Activated CD4-positive, alpha-beta T cell treated with anti-CD3 and anti-CD28 coated beads for 36 hours (primary cell): ENCODE measurements at regions of chr3 and their contacts with region 1.

Region 1: GRCh38 chr3:193572426-193572908 is 17.8 kb upstream of the ATP13A4 start:
- DNase-seq: peak; percentile 68
- ATAC-seq: peak; percentile 84
- H3K4me3 Mint-ChIP-seq: no peak overlapping the region
- H3K27ac Mint-ChIP-seq: no peak overlapping the region
- H3K4me1 Mint-ChIP-seq: no peaks in the 10 kb centered on the region
- H3K27me3 Mint-ChIP-seq: no peaks in the 10 kb centered on the region

Region 2: DNA sequence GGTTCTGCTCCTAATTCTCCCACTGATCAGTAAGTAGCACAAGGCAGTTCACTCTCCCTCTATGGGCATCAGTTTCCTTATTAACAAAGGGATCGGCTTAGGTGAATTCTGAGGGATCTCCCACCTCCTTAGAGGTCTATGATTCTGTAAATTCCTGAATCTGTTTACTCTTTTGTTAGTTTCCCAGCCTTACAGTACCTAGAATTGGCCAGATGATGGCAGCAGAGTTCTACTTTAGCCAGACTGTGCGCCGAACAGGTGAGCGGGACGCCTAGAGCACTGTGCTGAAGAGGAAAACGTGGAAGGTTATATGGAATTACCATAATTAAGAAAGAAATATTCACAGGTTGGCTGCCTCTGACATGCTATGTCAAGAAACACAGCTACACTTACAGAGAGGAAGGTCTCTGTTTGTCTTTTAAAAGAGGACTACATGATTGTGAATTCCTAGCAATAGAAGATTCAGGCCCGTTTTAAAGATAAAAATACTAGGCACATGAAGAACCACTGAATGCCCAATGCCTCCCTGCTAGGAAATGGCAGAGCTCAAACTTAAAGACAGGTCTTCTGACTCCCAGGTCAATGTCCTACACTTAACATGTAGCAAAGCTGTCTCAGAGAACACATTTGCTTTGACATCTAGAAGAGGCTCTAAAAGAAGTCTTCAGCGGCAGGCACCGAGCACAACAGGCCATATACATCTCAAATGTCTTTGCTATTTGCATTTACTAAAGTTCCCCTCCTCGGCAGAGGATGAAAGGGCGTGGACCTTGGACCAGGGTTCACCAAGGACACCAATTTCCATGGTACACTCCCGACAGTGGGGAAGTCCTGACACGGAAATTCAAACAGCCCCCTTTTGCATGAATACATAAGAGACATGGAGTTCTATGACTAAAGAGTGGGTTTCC is 1105.0 kb before region 1 on chr3:
- CTCF ChIA-PET with region 1: interaction called, 3 read pairs
- POLR2A ChIA-PET with region 1: no interaction called
- intact Hi-C with region 1: loop called (anchors 2 to 5 kb)
- DNase-seq: peak; percentile 66
- ATAC-seq: peak; percentile 79
- H3K4me3 Mint-ChIP-seq: no peak overlapping the region
- H3K27ac Mint-ChIP-seq: no peak overlapping the region
- H3K4me1 Mint-ChIP-seq: no peaks in the 10 kb centered on the region
- H3K27me3 Mint-ChIP-seq: peaks cover 27% of the 10 kb centered on the region

Region 3: DNA sequence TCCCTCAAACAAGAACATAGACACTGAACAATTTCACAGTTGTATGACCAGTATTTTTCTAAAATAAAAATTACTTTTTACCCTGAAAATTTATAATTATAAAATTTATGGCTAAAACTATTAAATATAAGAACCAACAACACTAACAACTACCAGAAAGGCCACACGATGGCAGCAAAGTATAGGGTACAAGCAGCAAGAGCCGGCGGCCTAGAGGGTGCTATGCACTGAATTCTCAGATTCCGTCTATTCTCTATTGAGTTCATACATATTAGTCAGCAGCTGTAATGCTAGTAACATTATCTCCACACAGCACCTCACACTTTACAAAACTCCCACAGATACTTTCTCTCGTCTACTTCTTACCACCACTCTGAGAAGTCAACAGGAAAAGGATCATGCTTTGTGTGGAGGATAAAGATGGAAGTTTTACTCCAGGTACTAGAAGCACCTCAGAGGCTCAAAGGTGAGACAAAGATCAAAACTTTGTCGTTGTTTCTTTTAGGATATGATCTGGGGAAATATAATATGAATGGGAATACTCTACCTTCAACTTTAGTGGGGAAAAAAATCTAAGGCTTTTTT is 1005.7 kb before region 1 on chr3:
- CTCF ChIA-PET with region 1: interaction called, 4 read pairs
- POLR2A ChIA-PET with region 1: no interaction called
- intact Hi-C with region 1: loop called (anchors 1 to 2 kb)
- DNase-seq: peak; percentile 83
- ATAC-seq: peak; percentile 83
- H3K4me3 Mint-ChIP-seq: no peak overlapping the region
- H3K27ac Mint-ChIP-seq: no peak overlapping the region
- H3K4me1 Mint-ChIP-seq: peaks cover 7% of the 10 kb centered on the region
- H3K27me3 Mint-ChIP-seq: peaks cover 16% of the 10 kb centered on the region

Region 4: DNA sequence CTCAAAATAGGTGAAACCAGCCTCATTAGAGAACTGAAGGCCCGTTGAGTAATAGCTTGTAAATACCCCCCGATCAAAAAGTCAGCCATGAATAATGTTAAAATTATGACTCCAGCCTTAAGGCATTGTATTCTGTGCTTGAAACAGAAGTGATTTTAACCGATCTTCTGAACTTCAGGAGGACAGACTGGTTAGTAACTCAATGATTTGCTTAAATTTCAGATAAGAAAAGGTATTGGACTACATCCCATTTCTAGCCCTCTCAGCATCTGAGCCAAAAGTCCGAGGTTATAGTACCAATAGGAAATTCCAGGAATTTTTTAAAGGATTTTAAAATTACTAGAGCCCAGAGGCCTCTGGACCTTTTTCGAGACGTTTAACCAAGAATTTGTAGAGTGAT is 777.4 kb before region 1 on chr3:
- CTCF ChIA-PET with region 1: no interaction called
- POLR2A ChIA-PET with region 1: no interaction called
- intact Hi-C with region 1: no loop called
- DNase-seq: no peak
- ATAC-seq: no peak
- H3K4me3 Mint-ChIP-seq: no peak overlapping the region
- H3K27ac Mint-ChIP-seq: no peak overlapping the region
- H3K4me1 Mint-ChIP-seq: no peaks in the 10 kb centered on the region
- H3K27me3 Mint-ChIP-seq: no peaks in the 10 kb centered on the region

Region 5: DNA sequence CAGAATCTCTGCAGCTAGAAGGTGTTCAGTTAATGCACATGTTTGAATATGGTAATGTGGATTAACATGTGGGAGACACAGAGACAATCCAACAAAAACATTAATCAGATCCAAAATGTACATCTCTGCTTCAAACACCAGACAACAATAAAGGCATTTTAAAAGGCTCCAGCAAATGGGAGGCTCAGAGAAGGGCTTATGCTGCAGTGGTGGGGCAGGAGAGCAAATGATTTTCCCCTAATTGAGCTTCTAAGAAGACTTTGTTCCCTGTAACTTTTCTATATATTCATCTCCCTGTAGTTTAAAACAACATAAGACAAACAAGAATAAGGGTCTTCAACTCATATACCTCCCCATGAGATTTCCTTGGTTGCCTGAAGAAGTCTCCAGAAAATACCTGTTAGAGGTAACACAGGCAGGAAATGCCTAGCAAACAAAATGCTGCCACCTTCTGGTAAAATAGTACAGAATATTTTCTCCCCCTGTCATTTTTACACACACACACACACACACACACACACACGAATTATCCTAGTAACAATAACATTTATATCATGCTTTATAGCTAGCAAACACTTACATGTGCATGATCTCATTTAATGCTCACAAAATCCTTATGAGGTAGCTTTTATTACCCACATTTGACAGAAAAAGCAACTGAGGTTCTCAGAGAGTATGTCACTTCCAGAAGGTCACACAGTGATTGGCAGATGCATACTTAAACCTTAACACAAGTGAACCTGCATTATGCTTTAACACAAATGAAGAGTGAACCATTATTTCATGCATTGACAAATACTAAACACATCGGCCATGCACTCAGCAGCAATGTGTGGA is 531.4 kb before region 1 on chr3:
- CTCF ChIA-PET with region 1: no interaction called
- POLR2A ChIA-PET with region 1: no interaction called
- intact Hi-C with region 1: loop called in 1 of 2 experiments (anchors 5 kb)
- DNase-seq: no peak
- ATAC-seq: no peak
- H3K4me3 Mint-ChIP-seq: no peak overlapping the region
- H3K27ac Mint-ChIP-seq: no peak overlapping the region
- H3K4me1 Mint-ChIP-seq: no peaks in the 10 kb centered on the region
- H3K27me3 Mint-ChIP-seq: no peaks in the 10 kb centered on the region

Region 6: GRCh38 chr3:193190146-193190786 is 382.2 kb before region 1 on chr3:
- CTCF ChIA-PET with region 1: no interaction called
- POLR2A ChIA-PET with region 1: no interaction called
- intact Hi-C with region 1: loop called in 1 of 2 experiments (anchors 1 kb)
- DNase-seq: peak; percentile 19
- ATAC-seq: peak; percentile 30
- H3K4me3 Mint-ChIP-seq: no peak overlapping the region
- H3K27ac Mint-ChIP-seq: no peak overlapping the region
- H3K4me1 Mint-ChIP-seq: no peaks in the 10 kb centered on the region
- H3K27me3 Mint-ChIP-seq: peaks cover 10% of the 10 kb centered on the region

Region 7: DNA sequence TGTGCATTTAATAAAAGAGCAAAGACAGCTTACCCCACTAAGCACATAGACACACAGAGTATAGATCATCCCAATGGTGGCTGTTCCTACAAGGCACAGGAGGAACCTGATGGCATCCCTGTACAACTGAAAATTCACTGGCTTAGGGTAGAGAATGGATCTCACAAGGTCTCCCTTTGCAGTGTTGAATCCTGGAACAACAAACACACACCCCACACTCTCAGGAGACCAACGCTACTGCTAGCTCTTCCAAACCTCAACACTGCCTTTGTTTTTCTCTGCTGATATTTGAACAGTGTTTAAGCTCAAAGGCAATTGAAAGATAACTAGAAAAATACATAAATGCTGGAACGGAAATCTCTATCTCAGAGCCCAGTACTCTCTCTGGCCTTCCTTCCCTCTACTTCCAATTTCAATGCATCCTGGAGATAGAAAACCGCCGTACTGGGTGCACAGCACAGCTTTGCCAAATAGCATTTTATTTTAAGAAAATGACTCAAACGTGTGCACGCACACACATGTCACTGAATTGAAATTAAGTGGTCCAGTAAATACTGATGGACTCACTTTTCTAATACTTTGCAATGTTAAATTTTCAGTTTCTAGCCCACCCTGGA is 106.4 kb before region 1 on chr3:
- CTCF ChIA-PET with region 1: interaction called, 4 read pairs
- POLR2A ChIA-PET with region 1: no interaction called
- intact Hi-C with region 1: loop called (anchors 1 kb)
- DNase-seq: no peak
- ATAC-seq: no peak
- H3K4me3 Mint-ChIP-seq: no peak overlapping the region
- H3K27ac Mint-ChIP-seq: no peak overlapping the region
- H3K4me1 Mint-ChIP-seq: no peaks in the 10 kb centered on the region
- H3K27me3 Mint-ChIP-seq: no peaks in the 10 kb centered on the region